SK-N-SH (cell line): ENCODE measurements at regions of chr1 and their contacts with region 1.

Region 1: DNA sequence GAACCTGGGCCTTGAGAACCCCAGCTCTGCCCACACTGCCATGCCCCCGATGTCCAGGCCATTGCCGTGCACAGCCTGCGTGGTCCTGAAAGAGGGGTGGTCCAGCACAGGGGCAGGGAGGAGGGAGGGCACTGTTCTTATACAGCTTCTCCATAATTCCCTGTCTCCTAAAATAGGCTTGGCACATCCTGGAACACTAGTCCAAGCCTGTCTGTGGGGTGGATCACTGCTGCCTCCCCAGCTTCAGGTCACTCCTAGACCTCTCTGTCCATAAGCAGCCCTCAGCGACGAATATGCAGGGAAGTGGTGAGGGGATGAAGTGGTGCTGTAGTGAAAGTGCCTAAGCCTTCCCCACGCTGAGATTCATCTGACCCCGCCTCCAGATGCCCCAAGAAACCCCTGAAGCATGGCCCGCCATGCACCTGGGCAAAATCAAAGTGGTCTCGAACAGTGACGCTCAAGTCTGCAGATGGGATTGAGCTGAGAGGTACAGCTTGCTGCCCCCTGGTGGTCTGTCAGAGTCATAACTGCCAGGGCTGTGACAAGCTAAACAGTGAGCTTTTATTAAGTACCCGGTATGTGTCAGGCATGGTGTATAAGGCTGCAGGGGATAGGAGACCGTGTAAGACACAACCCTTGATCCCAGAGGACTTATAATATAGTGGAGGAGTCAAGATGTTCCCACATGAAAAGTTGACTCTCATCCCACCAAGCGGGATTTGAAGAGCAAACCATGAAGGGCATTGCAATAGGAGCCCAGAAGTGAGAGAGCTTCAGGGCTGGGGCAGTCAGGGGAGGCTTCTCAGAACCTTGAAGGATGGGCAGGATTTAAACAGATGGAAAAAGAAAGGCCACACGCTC is 66.6 kb downstream of the FAM163A start:
- DNase-seq: peak; percentile 81
- H3K4me3 ChIP-seq: no peak overlapping the region; a peak in 1 of 4 replicates
- H3K27ac ChIP-seq: peak overlapping the region in 1 of 2 experiments; percentile 79; a peak in 2 of 4 replicates
- H3K4me1 ChIP-seq: peaks cover 0 to 58% of the 10 kb centered on the region in 2 experiments; a peak in 1 of 4 replicates
- H3K27me3 ChIP-seq: peaks cover 10% of the 10 kb centered on the region; the same call in 1 of the 2 replicates
- CTCF ChIP-seq: peak; percentile 92
- EP300 ChIP-seq: no peak
- RAD21 ChIP-seq: peak; percentile 84

Region 2: GRCh38 chr1:179719272-179719671 is 90.5 kb before region 1 on chr1:
- CTCF ChIA-PET with region 1: interaction called, 862 read pairs
- POLR2A ChIA-PET with region 1: no interaction called
- DNase-seq: no peak
- H3K4me3 ChIP-seq: no peak overlapping the region
- H3K27ac ChIP-seq: no peak overlapping the region
- H3K4me1 ChIP-seq: no peaks in the 10 kb centered on the region
- H3K27me3 ChIP-seq: no peaks in the 10 kb centered on the region
- CTCF ChIP-seq: no peak
- EP300 ChIP-seq: no peak
- RAD21 ChIP-seq: no peak

Region 3: GRCh38 chr1:179761296-179761695 is 48.4 kb before region 1 on chr1:
- CTCF ChIA-PET with region 1: interaction called, 18 read pairs
- POLR2A ChIA-PET with region 1: interaction called, 3 read pairs
- DNase-seq: peak; percentile 40
- H3K4me3 ChIP-seq: no peak overlapping the region
- H3K27ac ChIP-seq: peak overlapping the region in 1 of 2 experiments; percentile 96; a peak in 3 of 4 replicates
- H3K4me1 ChIP-seq: peaks cover 0 to 83% of the 10 kb centered on the region in 2 experiments; a peak in 2 of 4 replicates
- H3K27me3 ChIP-seq: no peaks in the 10 kb centered on the region
- CTCF ChIP-seq: no peak
- EP300 ChIP-seq: peak in 1 of 2 experiments; percentile 72; a peak in 1 of 4 replicates
- RAD21 ChIP-seq: peak; percentile 2; the same call in 1 of the 2 replicates

Region 4: DNA sequence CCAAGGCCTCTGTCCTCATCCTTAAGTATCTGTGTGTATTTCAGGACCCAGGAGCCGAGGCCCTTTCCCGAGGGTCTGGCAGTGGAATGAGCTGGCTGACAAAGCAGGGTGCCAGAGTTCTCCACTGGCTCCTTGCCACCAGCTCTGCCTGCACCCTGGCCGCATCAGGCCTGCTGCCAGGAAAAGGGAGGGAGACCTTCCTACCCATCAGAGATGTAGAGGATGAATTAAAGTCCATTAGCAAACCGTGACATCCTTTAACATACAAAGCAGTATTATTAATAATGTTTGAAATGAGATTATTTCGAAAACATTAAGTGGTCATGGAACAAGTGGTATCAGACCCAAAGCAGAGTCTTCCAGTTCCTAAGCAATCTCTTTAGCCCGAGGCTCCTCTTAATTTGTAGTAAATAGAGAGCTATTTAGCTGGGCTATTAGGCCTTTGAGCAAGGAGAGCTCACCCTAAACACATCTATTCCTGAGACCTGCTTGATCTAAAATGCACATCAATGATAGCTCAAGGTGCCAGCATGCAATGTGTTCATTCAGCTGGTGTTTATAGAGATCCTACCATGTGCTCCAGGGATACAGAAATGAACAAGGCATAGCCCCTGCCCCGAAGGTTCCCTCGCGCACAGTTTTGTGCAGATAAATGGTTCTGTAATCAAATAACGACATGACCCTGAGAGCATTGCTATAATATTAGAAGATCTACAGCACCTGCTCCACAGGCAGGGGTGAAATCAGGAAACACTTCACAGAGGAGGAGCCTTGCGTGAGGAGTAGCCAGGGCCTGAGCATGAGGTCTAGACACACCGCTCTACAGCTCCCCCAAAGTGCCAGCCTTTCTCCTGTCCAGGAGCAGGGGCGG is 22.7 kb before region 1 on chr1:
- CTCF ChIA-PET with region 1: interaction called, 186 read pairs
- POLR2A ChIA-PET with region 1: interaction called, 34 read pairs
- DNase-seq: peak; percentile 75
- H3K4me3 ChIP-seq: no peak overlapping the region
- H3K27ac ChIP-seq: peak overlapping the region; percentile 28 to 98; a peak in 3 of 4 replicates
- H3K4me1 ChIP-seq: peaks cover 0 to 85% of the 10 kb centered on the region in 2 experiments; a peak in 2 of 4 replicates
- H3K27me3 ChIP-seq: peaks cover 15% of the 10 kb centered on the region; the same call in 1 of the 2 replicates
- CTCF ChIP-seq: no peak
- EP300 ChIP-seq: peak in 1 of 2 experiments; percentile 75; a peak in 1 of 4 replicates
- RAD21 ChIP-seq: peak; percentile 30

Region 5: GRCh38 chr1:179831852-179832699 is 22.3 kb after region 1 on chr1:
- CTCF ChIA-PET with region 1: interaction called, 72 read pairs
- POLR2A ChIA-PET with region 1: no interaction called
- DNase-seq: no peak
- H3K4me3 ChIP-seq: no peak overlapping the region
- H3K27ac ChIP-seq: no peak overlapping the region
- H3K4me1 ChIP-seq: no peaks in the 10 kb centered on the region; a peak in 1 of 4 replicates
- H3K27me3 ChIP-seq: no peaks in the 10 kb centered on the region
- CTCF ChIP-seq: no peak
- EP300 ChIP-seq: no peak
- RAD21 ChIP-seq: no peak

Region 6: GRCh38 chr1:179867807-179868330 is 58.1 kb after region 1 on chr1:
- CTCF ChIA-PET with region 1: interaction called, 16 read pairs
- POLR2A ChIA-PET with region 1: no interaction called
- DNase-seq: peak; percentile 63
- H3K4me3 ChIP-seq: no peak overlapping the region
- H3K27ac ChIP-seq: no peak overlapping the region
- H3K4me1 ChIP-seq: peaks cover 0 to 4% of the 10 kb centered on the region in 2 experiments; a peak in 3 of 4 replicates
- H3K27me3 ChIP-seq: no peaks in the 10 kb centered on the region
- CTCF ChIP-seq: peak; percentile 82
- EP300 ChIP-seq: no peak
- RAD21 ChIP-seq: peak; percentile 65